ENCODE measurements at regions of chr11 and their contacts with region 1.

Region 1: GRCh38 chr11:13955971-13956421 is 6.5 kb upstream of the SPON1 start:
- DNase-seq: peak in 8 of 9 donors; percentile 39 to 75 (median 56)
- ATAC-seq: peak; percentile 91
- H3K4me3 ChIP-seq: no peak overlapping the region
- H3K4me3 Mint-ChIP-seq: no peak overlapping the region
- H3K27ac ChIP-seq: no peak overlapping the region
- H3K27ac Mint-ChIP-seq: no peak overlapping the region
- H3K4me1 ChIP-seq: no peaks in the 10 kb centered on the region
- H3K4me1 Mint-ChIP-seq: peaks cover 0 to 2% (median 0%) of the 10 kb centered on the region in 7 donors
- H3K27me3 ChIP-seq: no peaks in the 10 kb centered on the region
- H3K27me3 Mint-ChIP-seq: peaks cover 18 to 55% (median 22%) of the 10 kb centered on the region in 5 donors

Region 2: GRCh38 chr11:13772223-13773046 is 183.6 kb before region 1 on chr11:
- CTCF ChIA-PET with region 1: interaction called, 13 read pairs
- POLR2A ChIA-PET with region 1: interaction called, 3 read pairs
- intact Hi-C with region 1: loop called (anchors 1 kb)
- DNase-seq: peak in 7 of 9 donors; percentile 61 to 80 (median 75)
- ATAC-seq: peak; percentile 79
- H3K4me3 ChIP-seq: no peak overlapping the region
- H3K4me3 Mint-ChIP-seq: no peak overlapping the region
- H3K27ac ChIP-seq: no peak overlapping the region
- H3K27ac Mint-ChIP-seq: no peak overlapping the region
- H3K4me1 ChIP-seq: no peaks in the 10 kb centered on the region
- H3K4me1 Mint-ChIP-seq: peaks cover 0 to 9% (median 5%) of the 10 kb centered on the region in 7 donors
- H3K27me3 ChIP-seq: no peaks in the 10 kb centered on the region
- H3K27me3 Mint-ChIP-seq: peaks cover 0 to 44% (median 4%) of the 10 kb centered on the region in 5 donors

Region 3: DNA sequence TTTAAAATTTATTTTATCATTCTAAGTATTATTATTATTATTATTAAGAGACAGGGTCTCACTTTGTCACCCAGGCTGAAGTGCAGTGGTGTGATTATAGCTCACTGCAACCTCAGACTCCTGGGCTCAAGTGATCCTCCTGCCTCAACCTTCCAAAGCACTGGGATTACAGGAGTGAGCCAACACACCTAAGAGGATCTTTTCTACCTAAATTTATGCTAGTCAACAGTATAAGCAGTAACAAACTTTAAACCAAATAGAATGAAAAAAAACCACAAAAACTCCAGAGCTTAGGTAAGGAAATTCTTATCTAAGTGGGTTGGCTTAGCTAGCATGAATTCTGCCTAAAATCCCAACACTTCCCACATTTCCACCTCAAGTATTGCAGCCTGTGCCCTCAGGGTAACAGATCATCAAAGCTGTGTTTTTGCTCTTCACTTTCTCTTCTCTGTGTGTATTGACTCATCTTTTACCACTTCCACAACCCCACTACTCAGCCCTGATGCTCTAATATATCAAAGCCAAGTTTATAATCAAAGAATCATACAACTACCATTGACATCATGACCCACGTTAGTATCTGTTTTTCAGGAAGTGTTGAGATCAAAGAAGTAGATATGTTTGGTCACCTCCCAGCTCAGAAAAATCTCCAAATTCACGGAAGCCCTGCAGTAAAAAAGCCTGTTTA is 87.1 kb before region 1 on chr11:
- CTCF ChIA-PET with region 1: interaction called, 6 read pairs
- POLR2A ChIA-PET with region 1: interaction called, 4 read pairs
- intact Hi-C with region 1: loop called in 1 of 2 experiments (anchors 1 kb)
- DNase-seq: peak in 7 of 9 donors; percentile 73 to 92 (median 88)
- ATAC-seq: peak; percentile 96
- H3K4me3 ChIP-seq: no peak overlapping the region
- H3K4me3 Mint-ChIP-seq: peak overlapping the region in 9 of 10 donors; percentile 2 to 70 (median 40)
- H3K27ac ChIP-seq: peak overlapping the region; percentile 87
- H3K27ac Mint-ChIP-seq: peak overlapping the region; percentile 86 to 97 (median 92)
- H3K4me1 ChIP-seq: peaks cover 9 to 19% of the 10 kb centered on the region in 2 donors
- H3K4me1 Mint-ChIP-seq: peaks cover 19 to 56% (median 43%) of the 10 kb centered on the region in 7 donors
- H3K27me3 ChIP-seq: no peaks in the 10 kb centered on the region
- H3K27me3 Mint-ChIP-seq: peaks cover 0 to 14% (median 0%) of the 10 kb centered on the region in 5 donors

Region 4: GRCh38 chr11:14148653-14149273 is 192.8 kb after region 1 on chr11:
- CTCF ChIA-PET with region 1: interaction called, 67 read pairs
- POLR2A ChIA-PET with region 1: interaction called, 3 read pairs
- intact Hi-C with region 1: loop called (anchors 1 kb)
- DNase-seq: peak in 7 of 9 donors; percentile 26 to 66 (median 46)
- ATAC-seq: peak; percentile 75
- H3K4me3 ChIP-seq: no peak overlapping the region
- H3K4me3 Mint-ChIP-seq: no peak overlapping the region
- H3K27ac ChIP-seq: no peak overlapping the region
- H3K27ac Mint-ChIP-seq: peak overlapping the region in 1 of 9 donors; percentile 74
- H3K4me1 ChIP-seq: no peaks in the 10 kb centered on the region
- H3K4me1 Mint-ChIP-seq: peaks cover 0 to 5% (median 4%) of the 10 kb centered on the region in 7 donors
- H3K27me3 ChIP-seq: no peaks in the 10 kb centered on the region
- H3K27me3 Mint-ChIP-seq: peaks cover 0 to 20% (median 0%) of the 10 kb centered on the region in 5 donors

Region 5: DNA sequence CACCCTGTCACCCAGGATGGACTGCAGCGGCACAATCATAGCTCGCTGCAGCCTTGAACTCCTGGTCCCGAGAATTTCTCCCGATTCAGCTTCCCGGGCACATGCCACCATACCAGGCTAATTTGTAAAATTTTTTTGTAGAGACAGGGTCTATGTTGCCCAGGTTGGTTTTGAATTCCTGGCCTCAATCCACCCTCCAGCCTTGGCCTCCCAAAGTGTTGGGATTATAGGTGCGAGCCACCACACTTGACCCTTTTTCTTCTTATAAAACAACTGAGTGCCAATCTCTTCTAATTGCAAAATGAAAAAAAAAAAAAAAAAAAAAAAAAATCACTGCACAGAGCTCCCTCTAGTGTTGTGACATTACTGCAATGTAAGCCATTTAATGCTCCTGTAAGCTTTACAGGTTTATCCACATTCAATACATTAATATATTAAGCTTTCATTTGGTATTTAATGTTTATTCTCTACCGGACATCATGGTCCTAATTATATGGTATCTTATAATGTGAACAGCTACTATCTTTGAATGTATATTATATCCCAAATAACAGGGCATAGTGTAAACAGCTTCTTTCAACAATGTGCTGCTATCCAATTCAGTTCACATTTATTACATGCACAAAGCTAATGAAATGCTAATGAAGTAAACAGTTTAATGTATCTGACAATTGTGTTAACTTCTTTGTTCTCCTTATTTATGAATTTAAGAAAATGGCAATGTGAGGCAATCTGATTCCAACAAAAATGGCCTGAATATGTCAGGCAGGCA is 499.1 kb after region 1 on chr11:
- CTCF ChIA-PET with region 1: interaction called, 5 read pairs
- POLR2A ChIA-PET with region 1: no interaction called
- intact Hi-C with region 1: loop called (anchors 1 to 10 kb)
- DNase-seq: peak in 5 of 9 donors; percentile 4 to 22 (median 12)
- ATAC-seq: peak; percentile 67
- H3K4me3 ChIP-seq: no peak overlapping the region
- H3K4me3 Mint-ChIP-seq: no peak overlapping the region
- H3K27ac ChIP-seq: no peak overlapping the region
- H3K27ac Mint-ChIP-seq: peak overlapping the region in 4 of 9 donors; percentile 1 to 52 (median 46)
- H3K4me1 ChIP-seq: peaks cover 0 to 3% of the 10 kb centered on the region in 2 donors
- H3K4me1 Mint-ChIP-seq: peaks cover 0 to 10% (median 0%) of the 10 kb centered on the region in 7 donors
- H3K27me3 ChIP-seq: no peaks in the 10 kb centered on the region
- H3K27me3 Mint-ChIP-seq: no peaks in the 10 kb centered on the region

Measured in naive thymus-derived CD4-positive, alpha-beta T cell (primary cell).